ENCODE measurements at regions of chr7 and their contacts with region 1.

Region 1: DNA sequence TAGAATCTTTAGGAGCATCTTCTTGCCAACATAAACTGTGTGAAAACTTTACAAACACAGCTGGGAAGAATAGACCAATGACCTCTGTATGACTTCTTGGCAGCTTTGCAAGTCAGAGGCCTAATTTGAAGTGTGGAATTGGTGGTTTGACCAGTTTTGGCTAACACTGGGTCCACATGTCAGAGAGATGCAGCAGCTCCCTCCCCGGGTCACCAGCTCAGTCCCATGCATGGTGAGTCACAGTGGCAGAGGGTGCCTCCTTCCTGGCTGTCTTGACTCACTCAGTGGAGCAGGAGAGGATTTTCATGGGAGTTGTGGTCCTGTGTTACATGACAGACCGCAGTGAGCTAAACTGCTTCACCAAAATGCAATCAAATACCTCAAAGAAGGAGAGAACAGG is 8.2 kb upstream of the STARD3NL start:
- DNase-seq: no peak
- H3K4me3 ChIP-seq: no peak overlapping the region
- H3K27ac ChIP-seq: peak overlapping the region in 1 of 2 donors; percentile 60
- H3K4me1 ChIP-seq: no peaks in the 10 kb centered on the region
- H3K27me3 ChIP-seq: no peaks in the 10 kb centered on the region
- CTCF ChIP-seq: no peak
- POLR2A ChIP-seq: no peak

Region 2: GRCh38 chr7:38068461-38068860 is 101.4 kb before region 1 on chr7:
- intact Hi-C with region 1: no loop called
- DNase-seq: no peak
- H3K4me3 ChIP-seq: no peak overlapping the region
- H3K27ac ChIP-seq: no peak overlapping the region
- H3K4me1 ChIP-seq: no peaks in the 10 kb centered on the region
- H3K27me3 ChIP-seq: no peaks in the 10 kb centered on the region
- CTCF ChIP-seq: no peak
- POLR2A ChIP-seq: no peak

Region 3: GRCh38 chr7:38107486-38107893 is 62.4 kb before region 1 on chr7:
- intact Hi-C with region 1: no loop called
- DNase-seq: peak in 1 of 2 donors; percentile 30
- H3K4me3 ChIP-seq: no peak overlapping the region
- H3K27ac ChIP-seq: no peak overlapping the region
- H3K4me1 ChIP-seq: no peaks in the 10 kb centered on the region
- H3K27me3 ChIP-seq: no peaks in the 10 kb centered on the region
- CTCF ChIP-seq: peak; percentile 29 to 52 (median 50)
- POLR2A ChIP-seq: no peak

Region 4: DNA sequence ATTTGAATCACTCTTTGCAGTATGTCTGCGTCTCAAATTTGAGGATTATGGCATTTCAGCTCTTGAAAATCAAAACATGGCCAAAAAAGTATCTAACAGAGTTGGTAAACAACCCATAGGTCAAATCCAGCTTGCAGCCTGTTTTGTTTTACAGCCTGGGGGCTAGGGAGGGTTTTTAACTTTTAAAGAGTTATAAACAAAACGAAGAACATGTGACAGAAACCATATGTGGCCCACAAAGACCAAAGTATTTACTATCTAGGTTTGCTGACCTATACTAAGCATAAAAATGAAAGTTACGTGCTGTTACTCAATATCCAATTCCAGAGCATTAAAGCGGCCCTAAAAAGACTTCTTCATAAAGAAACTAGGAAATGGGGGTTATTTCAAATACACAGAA is 47.3 kb before region 1 on chr7:
- intact Hi-C with region 1: loop called (anchors 2 kb)
- DNase-seq: no peak
- H3K4me3 ChIP-seq: no peak overlapping the region
- H3K27ac ChIP-seq: no peak overlapping the region
- H3K4me1 ChIP-seq: no peaks in the 10 kb centered on the region
- H3K27me3 ChIP-seq: no peaks in the 10 kb centered on the region
- CTCF ChIP-seq: no peak
- POLR2A ChIP-seq: no peak